ENCODE measurements at regions of chr2 and their contacts with region 1.

Region 1: DNA sequence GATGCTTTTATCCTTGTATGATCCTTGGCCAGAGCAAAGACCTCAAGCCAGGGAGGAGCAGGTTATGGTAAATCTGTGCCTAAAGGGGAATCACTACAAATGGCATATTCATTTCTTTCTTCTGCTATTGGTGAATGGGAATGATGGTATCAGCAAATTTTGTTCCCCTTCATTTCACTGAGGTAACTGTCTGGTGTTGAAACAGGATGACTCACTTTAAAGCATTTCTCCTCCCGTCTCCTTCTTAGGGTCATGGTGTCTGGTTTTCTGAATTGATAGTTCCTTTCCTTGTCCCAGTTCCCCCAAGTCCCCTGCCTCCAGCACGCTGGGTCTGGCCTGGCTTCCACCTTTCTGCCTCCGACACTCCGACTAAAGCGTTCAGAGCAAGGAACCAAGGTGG is 109.2 kb downstream of the MREG start:
- DNase-seq: no peak
- H3K4me3 ChIP-seq: no peak overlapping the region
- H3K27ac ChIP-seq: no peak overlapping the region
- H3K4me1 ChIP-seq: no peaks in the 10 kb centered on the region; a peak in 1 of 4 replicates
- H3K27me3 ChIP-seq: no peaks in the 10 kb centered on the region
- CTCF ChIP-seq: no peak
- EP300 ChIP-seq: no peak
- RAD21 ChIP-seq: no peak

Region 2: DNA sequence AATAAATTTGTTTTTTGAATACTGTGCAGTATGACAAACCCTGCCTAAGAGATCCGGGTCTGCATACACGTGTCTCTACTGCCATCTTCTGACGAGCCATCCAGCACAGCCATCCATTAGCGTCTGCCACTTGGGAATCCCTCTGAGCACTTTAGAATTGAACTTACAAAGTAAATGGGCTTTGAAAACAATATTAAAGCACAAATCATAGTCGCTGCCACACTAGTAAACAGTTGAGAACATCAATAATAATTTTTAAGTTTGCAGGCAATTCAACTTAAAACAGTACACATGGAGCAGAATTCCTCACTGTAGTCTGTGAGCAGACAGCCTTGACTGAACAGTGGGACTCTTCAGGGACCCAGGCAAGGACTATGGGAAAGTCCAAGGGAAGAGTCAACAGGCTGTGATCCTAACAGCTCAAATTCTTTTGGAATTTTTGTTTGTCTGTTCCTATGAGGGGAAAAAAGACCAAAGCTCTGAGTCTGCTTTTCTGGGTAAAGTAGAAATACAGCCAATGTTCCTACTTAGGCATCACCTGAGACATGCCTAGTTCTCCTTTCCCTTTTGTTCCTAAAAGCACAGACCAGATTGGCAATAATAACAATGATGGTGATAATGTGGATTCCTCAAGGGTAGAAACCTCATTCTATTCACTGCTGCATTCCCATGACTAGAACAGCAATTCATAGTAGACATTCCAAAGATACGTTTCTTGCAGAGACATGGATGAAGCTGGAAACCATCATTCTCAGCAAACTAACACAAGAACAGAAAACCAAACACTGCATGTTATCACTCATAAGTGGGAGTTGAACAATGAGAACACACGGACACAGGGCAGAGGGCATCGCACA is 16.4 kb after region 1 on chr2:
- CTCF ChIA-PET with region 1: interaction called, 11 read pairs
- POLR2A ChIA-PET with region 1: no interaction called
- DNase-seq: peak; percentile 67
- H3K4me3 ChIP-seq: no peak overlapping the region
- H3K27ac ChIP-seq: peak overlapping the region in 1 of 2 experiments; percentile 53; a peak in 1 of 4 replicates
- H3K4me1 ChIP-seq: peaks cover 9 to 31% of the 10 kb centered on the region in 2 experiments
- H3K27me3 ChIP-seq: no peaks in the 10 kb centered on the region
- CTCF ChIP-seq: peak; percentile 96
- EP300 ChIP-seq: no peak
- RAD21 ChIP-seq: peak; percentile 96

Region 3: DNA sequence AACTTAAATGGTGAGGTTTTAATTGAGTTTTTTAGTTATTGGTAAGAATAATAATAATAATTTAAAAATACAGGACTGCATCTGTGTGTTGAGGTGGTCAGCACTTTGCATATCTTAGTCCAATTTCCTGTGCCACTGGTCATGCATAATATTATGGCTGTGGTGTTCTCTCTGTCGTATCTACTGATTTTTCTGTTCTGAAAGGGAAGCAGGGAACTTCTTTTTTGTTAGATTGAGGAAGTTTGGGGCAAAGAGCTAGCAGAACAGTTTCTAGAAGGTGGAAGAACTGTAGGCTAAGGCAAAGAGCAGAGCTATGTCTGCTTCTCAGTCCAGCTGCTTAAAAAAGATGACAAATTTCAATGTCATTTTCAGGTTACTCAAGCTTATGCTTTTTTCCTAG is 279.4 kb after region 1 on chr2:
- CTCF ChIA-PET with region 1: no interaction called
- POLR2A ChIA-PET with region 1: no interaction called
- DNase-seq: no peak
- H3K4me3 ChIP-seq: no peak overlapping the region
- H3K27ac ChIP-seq: peak overlapping the region in 1 of 2 experiments; percentile 16; a peak in 1 of 4 replicates
- H3K4me1 ChIP-seq: peaks cover 14 to 48% of the 10 kb centered on the region in 2 experiments
- H3K27me3 ChIP-seq: no peaks in the 10 kb centered on the region
- CTCF ChIP-seq: no peak
- EP300 ChIP-seq: no peak
- RAD21 ChIP-seq: no peak

Region 4: DNA sequence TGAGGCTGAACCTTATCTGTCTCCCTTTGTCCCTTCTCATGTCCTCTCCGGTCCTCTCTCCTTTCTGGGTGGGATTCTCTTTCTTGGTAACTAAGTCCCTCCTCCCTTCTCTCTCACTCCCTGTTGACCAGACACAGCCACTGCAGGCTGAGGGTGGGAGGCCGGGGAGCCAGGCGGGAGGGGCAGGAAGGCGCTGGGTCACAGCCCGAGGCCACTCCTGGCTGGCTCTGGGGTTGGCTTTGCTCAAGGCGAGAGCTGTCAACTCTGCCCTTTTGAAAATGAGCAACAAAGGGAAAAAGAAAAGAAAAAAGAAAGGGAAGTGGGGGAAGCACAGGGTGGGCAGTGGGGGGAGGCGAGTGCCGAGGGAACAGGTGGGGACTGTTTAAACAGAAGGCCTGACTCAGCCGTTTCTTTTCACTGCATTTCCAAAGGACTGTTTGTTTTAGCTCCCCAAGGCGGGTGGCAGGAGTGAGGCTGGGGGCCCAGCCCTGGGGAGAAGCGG is 861.7 kb after region 1 on chr2:
- CTCF ChIA-PET with region 1: no interaction called
- POLR2A ChIA-PET with region 1: no interaction called
- DNase-seq: peak; percentile 50
- H3K4me3 ChIP-seq: no peak overlapping the region
- H3K27ac ChIP-seq: no peak overlapping the region
- H3K4me1 ChIP-seq: peaks cover 0 to 6% of the 10 kb centered on the region in 2 experiments; a peak in 1 of 4 replicates
- H3K27me3 ChIP-seq: no peaks in the 10 kb centered on the region
- CTCF ChIP-seq: no peak
- EP300 ChIP-seq: no peak
- RAD21 ChIP-seq: no peak